A549 (cell line): ENCODE measurements at regions of chr17 and their contacts with region 1.

Region 1: GRCh38 chr17:57084802-57085447 is at the start of gene AKAP1:
- DNase-seq: peak; percentile 96 to 99
- ATAC-seq: peak; percentile 85 to 92
- H3K4me3 ChIP-seq: peak within 1 kb of the TSS; percentile 72
- H3K27ac ChIP-seq: peak within 1 kb of the TSS; percentile 92
- H3K4me1 ChIP-seq: peaks cover 15% of the 10 kb centered on the region
- CTCF ChIP-seq: no peak
- EP300 ChIP-seq: no peak
- POLR2A ChIP-seq: peak; percentile 97
- RAD21 ChIP-seq: peak in 1 of 2 experiments; percentile 29; a peak in 1 of 5 replicates
- polyA plus RNA-seq, gene AKAP1: 45.8 and 91.1 TPM in 2 replicates

Region 2: DNA sequence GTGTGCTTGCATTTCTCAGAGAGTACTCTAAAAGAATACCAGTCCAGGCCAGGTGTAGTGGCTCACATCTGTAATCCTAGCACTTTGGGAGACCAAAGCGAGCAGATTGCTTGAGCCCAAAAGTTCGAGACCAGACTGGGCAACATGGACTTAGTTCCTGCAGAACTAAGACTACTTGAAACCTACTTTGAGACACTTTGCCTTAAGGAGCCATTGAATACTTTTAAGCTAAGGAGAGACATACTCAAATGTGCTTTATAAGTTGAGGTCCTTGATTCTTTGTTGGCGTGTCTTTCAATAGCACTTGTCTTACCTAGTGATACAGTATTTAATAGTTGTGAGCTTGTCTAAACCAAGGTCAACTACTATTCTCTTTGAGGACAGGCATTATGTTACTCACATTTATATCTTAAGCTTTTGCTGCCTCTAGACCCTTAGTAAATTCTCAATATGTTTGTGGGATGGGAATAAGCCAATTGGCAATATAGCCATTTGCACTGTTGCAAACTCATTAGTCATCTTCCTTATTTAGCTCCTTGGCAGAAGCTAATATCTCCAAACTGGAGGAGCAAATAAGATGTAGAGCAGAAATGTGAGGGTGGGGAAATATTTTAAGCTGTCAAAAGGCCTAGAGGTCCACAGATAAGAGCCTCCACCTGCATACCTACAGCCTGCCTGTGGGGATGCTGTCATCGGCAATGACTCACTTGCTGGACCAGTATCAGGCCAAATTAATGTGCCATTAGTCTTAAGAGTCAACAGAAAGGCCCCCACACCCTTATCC is 90.7 kb before region 1 on chr17:
- CTCF ChIA-PET with region 1: no interaction called
- POLR2A ChIA-PET with region 1: no interaction called
- DNase-seq: no peak
- ATAC-seq: no peak
- H3K4me3 ChIP-seq: no peak overlapping the region
- H3K27ac ChIP-seq: no peak overlapping the region
- H3K4me1 ChIP-seq: no peaks in the 10 kb centered on the region
- CTCF ChIP-seq: no peak
- EP300 ChIP-seq: no peak
- POLR2A ChIP-seq: no peak
- RAD21 ChIP-seq: no peak

Region 3: GRCh38 chr17:57097832-57098421 is 13.0 kb after region 1 on chr17:
- CTCF ChIA-PET with region 1: interaction called, 12 read pairs
- POLR2A ChIA-PET with region 1: interaction called, 5 read pairs
- DNase-seq: no peak
- ATAC-seq: peak in 1 of 2 experiments; percentile 47; a peak in 3 of 6 replicates
- H3K4me3 ChIP-seq: no peak overlapping the region
- H3K27ac ChIP-seq: peak overlapping the region in 1 of 2 experiments; percentile 25; a peak in 2 of 6 replicates
- H3K4me1 ChIP-seq: peaks cover 11% of the 10 kb centered on the region; the same call in 2 of the 3 replicates
- CTCF ChIP-seq: no peak
- EP300 ChIP-seq: no peak
- POLR2A ChIP-seq: no peak
- RAD21 ChIP-seq: no peak